ENCODE measurements at regions of chr15 and their contacts with region 1.

Region 1: DNA sequence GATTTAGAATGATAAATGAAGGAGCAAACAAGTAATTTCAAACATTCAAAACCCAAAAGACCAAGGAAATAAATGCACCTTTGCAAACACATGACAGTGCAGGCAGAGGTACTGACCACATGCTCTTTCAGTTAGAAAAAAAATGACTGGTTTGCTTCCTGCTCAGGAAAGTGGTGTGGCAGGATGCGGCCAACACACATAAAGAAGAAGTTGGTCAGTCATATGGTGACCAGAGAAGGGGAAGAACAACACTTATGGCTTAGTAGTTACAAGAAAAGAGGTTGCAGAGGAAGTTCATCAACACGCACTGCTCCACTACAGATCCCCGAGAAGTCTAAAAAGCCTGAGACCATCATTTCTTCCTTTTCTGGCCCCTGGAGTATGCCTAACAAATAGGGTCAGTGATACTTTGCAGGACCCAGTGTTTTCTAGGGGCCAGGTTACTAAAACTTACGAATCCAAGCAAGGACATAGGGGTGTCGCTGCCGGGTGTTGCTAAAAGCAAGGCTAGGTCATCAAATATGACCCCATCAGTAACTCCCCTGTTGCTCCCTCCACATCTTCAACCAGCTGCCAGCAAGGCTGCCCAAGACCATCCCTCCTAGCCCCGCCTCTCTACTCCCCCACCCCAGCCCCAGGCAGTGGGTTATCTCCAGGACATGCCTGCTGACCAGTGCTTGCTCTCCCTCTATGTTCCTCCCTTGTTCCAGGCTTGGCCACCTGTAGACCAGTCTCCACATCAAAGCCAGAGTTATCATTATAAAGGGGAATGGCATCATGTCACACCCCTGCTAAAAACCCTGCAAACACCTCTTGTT is 11.2 kb downstream of the ATP8B4 start:
- DNase-seq: no peak
- ATAC-seq: no peak
- H3K4me3 ChIP-seq: no peak overlapping the region
- H3K27ac ChIP-seq: no peak overlapping the region
- H3K4me1 ChIP-seq: no peaks in the 10 kb centered on the region
- H3K27me3 ChIP-seq: no peaks in the 10 kb centered on the region
- CTCF ChIP-seq: no peak
- POLR2A ChIP-seq: no peak

Region 2: GRCh38 chr15:50055332-50055731 is 52.5 kb before region 1 on chr15:
- in situ Hi-C with region 1: no loop called
- intact Hi-C with region 1: loop called (anchors 5 kb)
- DNase-seq: peak in 1 of 2 donors; percentile 17
- ATAC-seq: peak; percentile 63 to 68
- H3K4me3 ChIP-seq: no peak overlapping the region
- H3K27ac ChIP-seq: peak overlapping the region; percentile 22 to 59 (median 40)
- H3K4me1 ChIP-seq: peaks cover 0 to 7% of the 10 kb centered on the region in 2 donors
- H3K27me3 ChIP-seq: no peaks in the 10 kb centered on the region
- CTCF ChIP-seq: no peak
- POLR2A ChIP-seq: no peak